Transverse colon (tissue), 4 donors: ENCODE measurements at regions of chr10 and their contacts with region 1.

Region 1: GRCh38 chr10:128859738-128860386 is 607.2 kb upstream of the MGMT start:
- DNase-seq: peak; percentile 45
- H3K4me3 ChIP-seq: no peak overlapping the region
- H3K27ac ChIP-seq: no peak overlapping the region
- H3K4me1 ChIP-seq: peaks cover 6 to 20% (median 9%) of the 10 kb centered on the region in 4 donors
- H3K27me3 ChIP-seq: no peaks in the 10 kb centered on the region
- CTCF ChIP-seq: peak; percentile 49 to 67 (median 53)
- EP300 ChIP-seq: no peak
- POLR2A ChIP-seq: no peak

Region 2: GRCh38 chr10:128588402-128588801 is 271.5 kb before region 1 on chr10:
- in situ Hi-C with region 1: no loop called
- intact Hi-C with region 1: no loop called
- DNase-seq: no peak
- H3K4me3 ChIP-seq: no peak overlapping the region
- H3K27ac ChIP-seq: no peak overlapping the region
- H3K4me1 ChIP-seq: no peaks in the 10 kb centered on the region
- H3K27me3 ChIP-seq: no peaks in the 10 kb centered on the region
- CTCF ChIP-seq: no peak
- EP300 ChIP-seq: no peak
- POLR2A ChIP-seq: no peak

Region 3: DNA sequence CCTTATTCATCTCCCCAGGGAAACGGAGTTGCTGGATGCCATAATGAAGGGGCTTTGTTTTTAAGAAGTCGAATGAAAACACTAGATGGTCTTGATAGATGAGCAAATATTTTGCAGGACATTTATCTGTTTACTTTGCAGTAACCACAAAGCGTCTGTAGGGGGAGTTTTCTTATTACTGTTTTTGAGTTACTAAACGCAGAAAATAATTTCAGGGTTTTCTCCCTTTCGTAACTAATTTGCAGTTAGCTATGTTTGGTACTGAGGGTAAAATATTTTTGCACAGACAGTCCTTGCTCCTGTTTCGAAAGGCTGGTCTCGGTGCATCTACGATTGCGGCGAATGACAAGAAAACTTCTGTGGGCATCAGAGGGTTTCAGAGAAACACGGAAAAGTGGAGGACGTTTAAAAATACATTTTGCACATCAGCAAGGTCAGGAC is 228.0 kb before region 1 on chr10:
- in situ Hi-C with region 1: no loop called
- intact Hi-C with region 1: loop called (anchors 5 kb)
- DNase-seq: no peak
- H3K4me3 ChIP-seq: no peak overlapping the region
- H3K27ac ChIP-seq: no peak overlapping the region
- H3K4me1 ChIP-seq: peaks cover 0 to 5% (median 0%) of the 10 kb centered on the region in 4 donors
- H3K27me3 ChIP-seq: no peaks in the 10 kb centered on the region
- CTCF ChIP-seq: peak; percentile 32 to 55 (median 40)
- EP300 ChIP-seq: no peak
- POLR2A ChIP-seq: no peak

Region 4: DNA sequence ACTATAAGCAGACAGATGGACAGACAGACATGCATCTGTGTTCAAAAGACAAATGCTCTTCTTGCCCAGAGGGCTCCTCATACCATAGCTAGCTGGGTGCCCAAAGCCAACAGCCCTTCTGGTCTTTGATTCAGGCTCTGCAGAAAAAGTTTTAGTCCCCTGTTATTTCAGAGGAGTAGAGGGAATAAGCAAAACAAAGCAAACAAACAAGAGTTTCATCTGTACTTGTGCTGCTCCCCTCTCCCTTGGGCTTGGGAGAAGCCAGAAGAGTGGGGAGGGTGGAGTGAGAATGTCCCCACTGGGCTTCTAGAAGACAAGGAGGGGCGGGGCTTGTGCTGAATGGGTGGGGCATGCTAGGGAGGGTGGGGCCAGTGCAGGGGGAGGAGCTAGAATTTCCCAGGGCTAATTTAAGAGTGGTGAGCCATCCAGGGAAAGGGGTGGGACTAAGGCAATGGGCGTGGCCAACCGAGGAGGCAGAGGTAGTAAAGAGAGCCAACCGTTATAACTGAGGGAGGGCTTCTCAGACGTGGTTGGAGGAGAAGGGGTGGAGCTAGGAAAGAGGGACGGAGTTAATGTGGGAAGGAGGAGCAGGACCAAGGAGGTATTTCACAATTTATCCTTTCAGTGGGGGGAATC is 506.0 kb after region 1 on chr10:
- in situ Hi-C with region 1: no loop called
- intact Hi-C with region 1: no loop called
- DNase-seq: no peak
- H3K4me3 ChIP-seq: no peak overlapping the region
- H3K27ac ChIP-seq: no peak overlapping the region
- H3K4me1 ChIP-seq: no peaks in the 10 kb centered on the region
- H3K27me3 ChIP-seq: no peaks in the 10 kb centered on the region
- CTCF ChIP-seq: no peak
- EP300 ChIP-seq: no peak
- POLR2A ChIP-seq: no peak

Region 5: GRCh38 chr10:129631006-129631405 is 771.1 kb after region 1 on chr10:
- in situ Hi-C with region 1: no loop called
- intact Hi-C with region 1: no loop called
- DNase-seq: no peak
- H3K4me3 ChIP-seq: no peak overlapping the region
- H3K27ac ChIP-seq: no peak overlapping the region
- H3K4me1 ChIP-seq: no peaks in the 10 kb centered on the region
- H3K27me3 ChIP-seq: no peaks in the 10 kb centered on the region
- CTCF ChIP-seq: no peak
- EP300 ChIP-seq: no peak
- POLR2A ChIP-seq: no peak